Activated CD4-positive, alpha-beta T cell treated with anti-CD3 and anti-CD28 coated beads for 36 hours (primary cell): ENCODE measurements at regions of chr5 and their contacts with region 1.

Region 1: DNA sequence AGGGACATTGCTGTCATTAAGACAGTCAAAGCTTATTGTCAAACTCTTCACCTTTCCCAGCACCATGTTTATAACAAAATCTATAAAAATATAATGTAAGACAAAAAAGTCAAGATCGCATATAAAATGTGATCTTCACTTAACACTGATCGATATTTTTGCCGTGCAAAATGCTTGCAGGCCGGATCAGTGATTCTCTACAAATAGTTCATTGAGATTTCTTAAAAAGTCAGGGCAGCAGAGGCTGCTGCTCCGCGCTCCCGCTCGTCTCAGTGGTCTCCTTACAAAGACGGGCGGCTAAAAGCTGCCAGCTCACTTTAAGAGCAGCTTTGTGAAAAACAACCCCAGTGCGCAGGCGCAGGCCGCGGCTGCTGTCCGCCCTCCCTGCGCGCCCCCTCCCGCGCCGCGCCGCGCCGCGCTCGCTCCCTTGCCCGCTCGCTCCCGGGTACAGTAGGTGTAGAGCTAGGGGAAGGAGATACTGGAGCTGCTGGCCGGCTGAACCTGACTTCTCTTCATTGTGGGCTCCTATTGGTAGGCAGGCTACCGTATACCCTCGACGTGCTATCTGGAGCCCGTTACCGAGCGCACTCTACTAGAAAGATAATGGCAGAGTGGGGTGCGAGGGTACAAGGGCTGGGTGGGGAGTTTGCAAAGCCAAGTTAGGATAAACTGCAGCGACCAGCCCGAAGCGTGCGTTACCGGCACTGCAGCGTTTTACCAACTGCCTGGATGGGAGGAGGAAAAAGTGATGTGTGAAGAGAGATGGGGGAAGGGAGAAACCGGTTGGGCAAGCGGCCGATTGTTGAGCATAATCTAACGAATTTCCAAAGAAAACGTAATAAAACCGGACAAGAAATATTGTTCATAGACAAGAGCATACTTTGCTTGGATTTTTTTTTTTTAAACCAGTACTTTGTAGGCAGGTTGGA is at the start of gene ARRDC3:
- DNase-seq: peak; percentile 98
- ATAC-seq: peak; percentile 67
- H3K4me3 Mint-ChIP-seq: peak within 1 kb of the TSS; percentile 98
- H3K27ac Mint-ChIP-seq: peak within 1 kb of the TSS; percentile 96
- H3K4me1 Mint-ChIP-seq: peaks cover 16% of the 10 kb centered on the region
- H3K27me3 Mint-ChIP-seq: no peaks in the 10 kb centered on the region
- total RNA-seq, gene ARRDC3: 21.7 to 21.9 TPM

Region 2: DNA sequence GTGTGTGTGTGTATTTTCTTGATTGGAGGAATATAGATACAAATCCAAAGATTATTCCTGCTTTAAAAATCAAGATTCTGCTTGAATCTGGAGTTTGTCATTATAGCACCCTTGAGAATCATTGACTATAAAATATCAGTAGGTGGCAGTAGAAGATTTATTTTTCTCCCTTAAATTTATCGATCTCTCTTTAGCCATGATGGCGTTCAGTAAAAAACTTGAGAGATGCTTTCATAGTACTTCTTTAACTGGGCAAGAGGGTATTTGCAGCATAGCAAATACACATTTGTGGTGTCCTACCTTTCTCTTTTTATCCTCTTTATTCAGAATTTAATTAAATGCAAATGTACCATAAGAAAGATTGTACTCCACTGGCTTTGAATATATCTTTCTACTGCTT is 517.0 kb before region 1 on chr5:
- CTCF ChIA-PET with region 1: interaction called, 19 read pairs
- POLR2A ChIA-PET with region 1: no interaction called
- intact Hi-C with region 1: loop called (anchors 1 to 2 kb)
- DNase-seq: no peak
- ATAC-seq: no peak
- H3K4me3 Mint-ChIP-seq: no peak overlapping the region
- H3K27ac Mint-ChIP-seq: no peak overlapping the region
- H3K4me1 Mint-ChIP-seq: peaks cover 7% of the 10 kb centered on the region
- H3K27me3 Mint-ChIP-seq: peaks cover 15% of the 10 kb centered on the region

Region 3: DNA sequence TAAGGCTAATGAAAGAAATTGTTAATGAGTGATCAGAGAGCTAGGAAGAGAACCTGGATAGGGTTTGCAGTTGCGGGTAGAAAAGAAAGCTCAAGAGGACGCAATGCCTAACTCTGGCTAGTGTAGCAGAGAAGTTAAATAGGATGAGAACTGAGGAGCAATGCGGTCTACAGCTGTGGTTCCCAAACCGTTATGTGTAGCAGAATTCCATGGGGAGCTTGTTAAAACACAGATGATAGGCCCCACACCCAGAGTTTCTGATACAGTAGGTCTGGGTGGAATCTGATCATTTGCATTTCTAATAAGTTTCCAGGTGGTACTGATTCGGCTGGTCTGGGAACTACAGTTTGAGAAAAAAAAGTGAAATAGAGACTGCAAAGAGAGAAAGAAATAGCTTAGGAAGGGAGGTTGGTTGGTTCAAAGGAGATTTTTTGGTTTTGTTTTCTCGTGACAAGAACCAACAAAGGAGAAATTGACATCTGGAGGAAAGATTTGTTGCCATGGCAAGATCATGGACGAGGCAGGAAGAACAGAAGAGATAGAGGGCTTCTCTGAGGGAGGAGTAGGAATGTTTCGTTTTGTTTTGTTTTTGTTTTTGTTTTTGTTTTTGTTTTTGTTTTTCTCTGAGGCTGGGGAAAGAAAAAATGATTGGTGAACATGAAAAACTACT is 276.3 kb before region 1 on chr5:
- CTCF ChIA-PET with region 1: interaction called, 35 read pairs
- POLR2A ChIA-PET with region 1: no interaction called
- intact Hi-C with region 1: no loop called
- DNase-seq: no peak
- ATAC-seq: no peak
- H3K4me3 Mint-ChIP-seq: no peak overlapping the region
- H3K27ac Mint-ChIP-seq: no peak overlapping the region
- H3K4me1 Mint-ChIP-seq: no peaks in the 10 kb centered on the region
- H3K27me3 Mint-ChIP-seq: peaks cover 8% of the 10 kb centered on the region

Region 4: DNA sequence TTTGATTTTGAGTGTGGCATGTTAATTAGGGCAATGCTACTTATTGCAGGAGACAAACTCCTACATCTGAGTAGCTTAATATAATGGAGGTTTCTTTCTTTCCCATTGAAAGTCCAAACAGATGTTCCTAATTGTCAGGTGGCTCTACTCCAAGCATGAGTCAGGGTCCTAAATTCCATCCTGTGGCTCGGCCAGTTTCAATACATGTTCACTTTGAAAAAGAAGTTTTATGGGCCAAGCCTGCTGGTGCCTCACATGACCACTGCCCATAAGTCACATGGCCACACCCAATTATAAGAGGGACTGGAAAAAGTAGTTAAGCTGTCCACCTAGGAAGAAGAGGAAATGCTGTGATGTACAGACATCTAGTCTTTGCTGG is 170.6 kb before region 1 on chr5:
- CTCF ChIA-PET with region 1: interaction called, 40 read pairs
- POLR2A ChIA-PET with region 1: no interaction called
- intact Hi-C with region 1: no loop called
- DNase-seq: no peak
- ATAC-seq: no peak
- H3K4me3 Mint-ChIP-seq: no peak overlapping the region
- H3K27ac Mint-ChIP-seq: no peak overlapping the region
- H3K4me1 Mint-ChIP-seq: no peaks in the 10 kb centered on the region
- H3K27me3 Mint-ChIP-seq: peaks cover 2% of the 10 kb centered on the region

Region 5: GRCh38 chr5:91244380-91245073 is 138.8 kb before region 1 on chr5:
- CTCF ChIA-PET with region 1: interaction called, 10 read pairs
- POLR2A ChIA-PET with region 1: no interaction called
- intact Hi-C with region 1: no loop called
- DNase-seq: no peak
- ATAC-seq: no peak
- H3K4me3 Mint-ChIP-seq: no peak overlapping the region
- H3K27ac Mint-ChIP-seq: no peak overlapping the region
- H3K4me1 Mint-ChIP-seq: peaks cover 4% of the 10 kb centered on the region
- H3K27me3 Mint-ChIP-seq: no peaks in the 10 kb centered on the region

Region 6: DNA sequence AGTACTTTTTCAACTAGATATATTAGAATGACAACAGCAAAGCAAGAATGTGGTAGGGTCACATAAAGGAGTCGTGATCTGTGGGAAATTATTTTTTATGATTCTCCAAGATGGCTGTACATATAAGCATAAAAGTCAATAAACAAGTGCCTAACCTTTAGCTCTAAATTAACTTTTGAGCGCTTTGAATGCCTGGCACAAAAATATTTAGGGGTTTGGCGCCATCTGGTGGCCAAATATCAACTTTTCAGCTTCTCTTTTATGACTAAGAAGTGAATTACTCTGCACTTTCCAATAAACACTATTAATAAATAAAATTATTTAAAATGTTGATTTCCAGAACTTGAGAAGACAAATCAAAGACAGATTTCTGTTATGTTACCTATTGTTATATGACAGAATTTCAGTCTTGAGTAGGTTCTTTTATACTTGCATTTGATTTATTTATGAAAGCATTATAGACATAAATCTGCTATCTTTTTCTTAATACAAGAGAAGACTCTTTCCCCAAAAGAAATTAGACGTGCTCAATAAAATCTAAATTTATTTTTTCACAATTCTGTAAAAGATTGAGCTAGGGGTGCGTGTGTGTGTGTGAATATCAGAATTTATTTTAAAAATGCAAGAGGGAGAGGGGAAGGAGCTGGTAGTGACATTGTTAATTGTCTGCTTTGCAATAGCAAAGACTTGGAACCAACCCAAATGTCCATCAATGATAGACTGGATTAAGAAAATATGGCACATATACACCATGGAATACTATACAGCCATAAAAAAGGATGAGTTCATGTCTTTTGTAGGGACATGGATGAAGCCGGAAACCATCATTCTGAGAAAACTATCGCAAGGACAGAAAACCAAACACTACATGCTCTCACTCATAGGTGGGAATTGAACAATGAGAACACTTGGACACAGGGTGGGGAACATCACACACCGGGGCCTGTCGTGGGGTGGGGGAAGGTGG is 36.6 kb after region 1 on chr5:
- CTCF ChIA-PET with region 1: interaction called, 127 read pairs
- POLR2A ChIA-PET with region 1: interaction called, 4 read pairs
- intact Hi-C with region 1: loop called (anchors 1 to 2 kb)
- DNase-seq: peak; percentile 83
- ATAC-seq: no peak
- H3K4me3 Mint-ChIP-seq: no peak overlapping the region
- H3K27ac Mint-ChIP-seq: no peak overlapping the region
- H3K4me1 Mint-ChIP-seq: peaks cover 6% of the 10 kb centered on the region
- H3K27me3 Mint-ChIP-seq: no peaks in the 10 kb centered on the region

Region 7: GRCh38 chr5:91443761-91444467 is 60.6 kb after region 1 on chr5:
- CTCF ChIA-PET with region 1: no interaction called
- POLR2A ChIA-PET with region 1: no interaction called
- intact Hi-C with region 1: no loop called
- DNase-seq: no peak
- ATAC-seq: peak; percentile 44
- H3K4me3 Mint-ChIP-seq: no peak overlapping the region
- H3K27ac Mint-ChIP-seq: no peak overlapping the region
- H3K4me1 Mint-ChIP-seq: peaks cover 2% of the 10 kb centered on the region
- H3K27me3 Mint-ChIP-seq: no peaks in the 10 kb centered on the region